GM12878 (cell line): ENCODE measurements at regions of chr15 and their contacts with region 1.

Region 1: GRCh38 chr15:75801859-75802593 is 41.2 kb upstream of the UBE2Q2 start:
- DNase-seq: no peak
- ATAC-seq: peak; percentile 100
- H3K4me3 ChIP-seq: no peak overlapping the region
- H3K27ac ChIP-seq: no peak overlapping the region
- H3K4me1 ChIP-seq: no peaks in the 10 kb centered on the region
- H3K27me3 ChIP-seq: peaks cover 1 to 2% of the 10 kb centered on the region in 2 experiments; a peak in 2 of 4 replicates
- CTCF ChIP-seq: peak; percentile 66 to 93 (median 80)
- EP300 ChIP-seq: no peak
- POLR2A ChIP-seq: no peak
- RAD21 ChIP-seq: peak; percentile 88

Region 2: DNA sequence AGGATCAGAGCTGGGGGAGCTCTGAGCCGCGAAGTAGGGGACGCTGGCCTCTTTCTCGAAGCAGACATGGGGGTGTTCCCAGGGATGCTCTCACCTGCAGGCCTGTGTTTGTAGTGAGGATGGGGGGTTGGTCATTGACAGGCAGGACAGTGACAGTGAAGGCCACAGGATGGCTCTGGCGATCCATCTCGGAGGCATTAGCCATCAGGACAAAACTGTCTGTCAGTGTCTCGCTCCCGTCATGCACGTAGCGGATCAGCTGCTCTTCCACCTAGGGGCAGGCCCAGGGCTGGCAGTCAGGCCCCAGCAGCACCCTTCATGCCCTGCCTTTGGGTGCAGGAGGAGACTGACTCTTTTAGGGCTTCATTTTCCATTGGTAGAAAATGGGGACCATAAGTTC is 117.4 kb before region 1 on chr15:
- CTCF ChIA-PET with region 1: interaction called, 48 read pairs
- POLR2A ChIA-PET with region 1: interaction called, 3 read pairs
- RAD21 ChIA-PET with region 1: interaction called, 12 read pairs
- SMC1A ChIA-PET with region 1: interaction called, 15 read pairs
- in situ Hi-C with region 1: loop called (anchors 5 kb)
- intact Hi-C with region 1: loop called (anchors 1 kb)
- DNase-seq: no peak
- ATAC-seq: no peak
- H3K4me3 ChIP-seq: no peak overlapping the region
- H3K27ac ChIP-seq: no peak overlapping the region
- H3K4me1 ChIP-seq: no peaks in the 10 kb centered on the region
- H3K27me3 ChIP-seq: no peaks in the 10 kb centered on the region
- CTCF ChIP-seq: no peak
- EP300 ChIP-seq: no peak
- POLR2A ChIP-seq: no peak
- RAD21 ChIP-seq: no peak

Region 3: GRCh38 chr15:75723847-75724660 is 78.0 kb before region 1 on chr15:
- CTCF ChIA-PET with region 1: interaction called, 46 read pairs
- POLR2A ChIA-PET with region 1: no interaction called
- RAD21 ChIA-PET with region 1: interaction called, 12 read pairs
- SMC1A ChIA-PET with region 1: interaction called, 14 read pairs
- in situ Hi-C with region 1: no loop called
- intact Hi-C with region 1: loop called (anchors 1 kb)
- DNase-seq: no peak
- ATAC-seq: peak; percentile 86
- H3K4me3 ChIP-seq: no peak overlapping the region
- H3K27ac ChIP-seq: no peak overlapping the region
- H3K4me1 ChIP-seq: peaks cover 3% of the 10 kb centered on the region; the same call in 1 of the 2 replicates
- H3K27me3 ChIP-seq: no peaks in the 10 kb centered on the region
- CTCF ChIP-seq: no peak
- EP300 ChIP-seq: peak in 1 of 2 experiments; percentile 37; a peak in 1 of 4 replicates
- POLR2A ChIP-seq: no peak
- RAD21 ChIP-seq: no peak

Region 4: GRCh38 chr15:75732809-75733451 is 69.1 kb before region 1 on chr15:
- CTCF ChIA-PET with region 1: interaction called, 46 read pairs
- POLR2A ChIA-PET with region 1: no interaction called
- RAD21 ChIA-PET with region 1: interaction called, 8 read pairs
- SMC1A ChIA-PET with region 1: interaction called, 14 read pairs
- in situ Hi-C with region 1: no loop called
- intact Hi-C with region 1: loop called (anchors 1 kb)
- DNase-seq: no peak
- ATAC-seq: peak; percentile 81
- H3K4me3 ChIP-seq: no peak overlapping the region
- H3K27ac ChIP-seq: no peak overlapping the region
- H3K4me1 ChIP-seq: no peaks in the 10 kb centered on the region
- H3K27me3 ChIP-seq: no peaks in the 10 kb centered on the region; a peak in 1 of 4 replicates
- CTCF ChIP-seq: peak; percentile 66 to 86 (median 77)
- EP300 ChIP-seq: no peak
- POLR2A ChIP-seq: no peak
- RAD21 ChIP-seq: peak; percentile 49; the same call in 1 of the 2 replicates

Region 5: GRCh38 chr15:75738647-75739331 is 63.2 kb before region 1 on chr15:
- CTCF ChIA-PET with region 1: interaction called, 10 read pairs
- POLR2A ChIA-PET with region 1: no interaction called
- RAD21 ChIA-PET with region 1: interaction called, 6 read pairs
- SMC1A ChIA-PET with region 1: interaction called, 5 read pairs
- in situ Hi-C with region 1: no loop called
- intact Hi-C with region 1: no loop called
- DNase-seq: peak; percentile 53
- ATAC-seq: peak; percentile 99
- H3K4me3 ChIP-seq: peak overlapping the region; percentile 97
- H3K27ac ChIP-seq: no peak overlapping the region
- H3K4me1 ChIP-seq: peaks cover 5% of the 10 kb centered on the region; the same call in 1 of the 2 replicates
- H3K27me3 ChIP-seq: no peaks in the 10 kb centered on the region
- CTCF ChIP-seq: no peak
- EP300 ChIP-seq: no peak
- POLR2A ChIP-seq: peak; percentile 54; the same call in 1 of the 2 replicates
- RAD21 ChIP-seq: no peak

Region 6: GRCh38 chr15:75817138-75817935 is 15.3 kb after region 1 on chr15:
- CTCF ChIA-PET with region 1: interaction called, 20 read pairs
- POLR2A ChIA-PET with region 1: no interaction called
- RAD21 ChIA-PET with region 1: no interaction called
- SMC1A ChIA-PET with region 1: interaction called, 3 read pairs
- in situ Hi-C with region 1: no loop called
- intact Hi-C with region 1: no loop called
- DNase-seq: no peak
- ATAC-seq: peak; percentile 36; the same call in 2 of the 3 replicates
- H3K4me3 ChIP-seq: no peak overlapping the region
- H3K27ac ChIP-seq: no peak overlapping the region
- H3K4me1 ChIP-seq: peaks cover 5% of the 10 kb centered on the region; the same call in 1 of the 2 replicates
- H3K27me3 ChIP-seq: no peaks in the 10 kb centered on the region
- CTCF ChIP-seq: no peak
- EP300 ChIP-seq: no peak
- POLR2A ChIP-seq: no peak
- RAD21 ChIP-seq: no peak

Region 7: DNA sequence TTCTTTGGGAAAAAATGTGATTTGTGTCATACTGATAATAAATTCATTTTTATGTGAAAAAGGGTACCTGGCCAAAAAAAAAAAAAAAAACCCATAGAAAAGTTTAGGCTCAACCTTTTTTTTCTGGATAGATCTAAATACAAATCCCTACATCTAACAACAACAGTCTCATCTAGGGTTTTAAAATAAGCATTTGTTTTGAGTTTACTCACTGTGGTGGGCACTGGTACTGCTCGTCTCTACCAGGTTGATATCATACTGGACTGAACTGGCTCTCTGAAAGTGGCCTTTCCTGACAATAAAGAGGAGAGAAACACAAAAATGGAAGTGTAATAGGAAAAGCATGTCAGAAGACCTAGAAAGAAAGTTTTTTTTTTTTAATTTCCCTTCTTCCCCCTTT is 153.7 kb after region 1 on chr15:
- CTCF ChIA-PET with region 1: no interaction called
- POLR2A ChIA-PET with region 1: no interaction called
- RAD21 ChIA-PET with region 1: no interaction called
- SMC1A ChIA-PET with region 1: no interaction called
- in situ Hi-C with region 1: no loop called
- intact Hi-C with region 1: no loop called
- DNase-seq: no peak
- ATAC-seq: peak; percentile 51; the same call in 1 of the 3 replicates
- H3K4me3 ChIP-seq: no peak overlapping the region
- H3K27ac ChIP-seq: no peak overlapping the region
- H3K4me1 ChIP-seq: no peaks in the 10 kb centered on the region
- H3K27me3 ChIP-seq: no peaks in the 10 kb centered on the region
- CTCF ChIP-seq: no peak
- EP300 ChIP-seq: no peak
- POLR2A ChIP-seq: no peak
- RAD21 ChIP-seq: no peak